WTC11 (cell line): ENCODE measurements at regions of chr14 and their contacts with region 1.

Region 1: DNA sequence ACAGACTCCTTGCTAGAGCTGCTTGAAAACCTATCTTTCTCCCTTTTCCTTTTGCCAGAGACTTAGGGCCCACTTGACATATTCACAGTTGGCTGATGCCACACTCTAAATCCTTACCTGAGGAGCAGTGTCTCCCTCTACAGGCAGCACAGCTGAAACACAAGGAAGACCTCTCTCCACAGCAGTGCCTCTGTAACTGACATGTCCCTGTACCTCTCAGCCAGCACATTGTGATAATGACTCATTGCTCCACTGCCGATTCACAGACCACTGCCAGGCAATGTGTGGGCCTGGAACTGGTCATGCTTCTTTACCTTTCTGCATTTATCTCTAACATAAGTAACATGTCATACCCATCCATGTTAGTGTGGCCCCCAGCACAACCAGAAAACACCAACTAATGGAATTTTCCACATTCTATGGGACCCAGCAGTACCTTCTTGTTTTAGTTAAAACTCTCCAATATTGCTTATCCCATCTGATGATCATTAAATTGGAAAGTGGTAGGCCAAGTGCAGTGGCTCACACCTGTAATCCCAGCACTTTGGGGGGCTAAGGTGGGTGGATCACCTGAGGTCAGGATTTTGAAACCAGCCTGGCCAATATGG is 56.5 kb downstream of the GTF2A1 start:
- DNase-seq: peak; percentile 84
- ATAC-seq: peak; percentile 99
- H3K4me3 Mint-ChIP-seq: no peak overlapping the region
- H3K27ac Mint-ChIP-seq: no peak overlapping the region
- H3K4me1 Mint-ChIP-seq: peaks cover 4% of the 10 kb centered on the region
- H3K27me3 Mint-ChIP-seq: no peaks in the 10 kb centered on the region; the same call in 1 of the 2 replicates
- CTCF ChIP-seq: peak; percentile 52; the same call in 1 of the 2 replicates

Region 2: DNA sequence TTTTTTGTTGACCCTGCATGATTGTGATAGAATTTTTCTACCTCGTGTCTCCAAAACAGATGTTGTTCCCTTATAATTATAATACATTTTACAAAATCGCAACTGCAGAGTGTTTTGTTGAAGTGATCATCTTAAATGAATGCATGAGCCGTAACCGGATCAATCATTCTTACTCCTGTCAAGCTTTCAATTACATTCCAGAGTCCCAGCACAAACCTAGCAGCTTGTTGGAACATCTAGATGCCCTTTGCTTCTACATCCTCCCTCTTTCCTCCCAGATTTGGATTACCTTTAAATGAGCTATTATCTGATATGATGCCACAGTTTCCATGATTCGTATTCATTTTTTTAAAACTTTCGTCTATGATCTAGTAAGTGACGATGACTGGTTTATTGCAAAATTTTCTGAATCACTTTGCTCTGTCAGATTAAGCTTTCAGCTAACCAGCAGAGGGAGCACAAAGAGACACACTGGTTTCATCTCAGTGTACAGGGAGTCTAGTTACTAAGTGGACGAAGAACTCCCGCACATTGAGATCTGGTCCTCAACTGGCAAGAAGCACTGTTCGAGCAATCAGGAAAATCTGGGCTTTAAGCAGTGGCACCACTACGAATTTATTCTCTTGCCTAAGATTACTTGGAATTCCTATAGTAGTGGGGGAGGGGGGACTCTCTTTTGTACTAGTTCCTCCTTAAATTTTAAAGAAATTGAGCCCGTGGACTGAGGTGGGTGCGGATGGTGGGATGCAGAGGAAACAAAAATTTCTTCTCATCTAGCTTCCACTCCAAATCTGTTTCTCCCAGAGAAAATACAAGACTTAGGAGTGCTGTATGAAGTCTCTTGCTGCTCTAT is 168.0 kb before region 1 on chr14:
- CTCF ChIA-PET with region 1: interaction called, 20 read pairs
- POLR2A ChIA-PET with region 1: no interaction called
- DNase-seq: no peak
- ATAC-seq: peak; percentile 48
- H3K4me3 Mint-ChIP-seq: no peak overlapping the region
- H3K27ac Mint-ChIP-seq: no peak overlapping the region
- H3K4me1 Mint-ChIP-seq: no peaks in the 10 kb centered on the region
- H3K27me3 Mint-ChIP-seq: no peaks in the 10 kb centered on the region; the same call in 1 of the 2 replicates
- CTCF ChIP-seq: no peak